ENCODE measurements at regions of chr5 and their contacts with region 1.

Region 1: DNA sequence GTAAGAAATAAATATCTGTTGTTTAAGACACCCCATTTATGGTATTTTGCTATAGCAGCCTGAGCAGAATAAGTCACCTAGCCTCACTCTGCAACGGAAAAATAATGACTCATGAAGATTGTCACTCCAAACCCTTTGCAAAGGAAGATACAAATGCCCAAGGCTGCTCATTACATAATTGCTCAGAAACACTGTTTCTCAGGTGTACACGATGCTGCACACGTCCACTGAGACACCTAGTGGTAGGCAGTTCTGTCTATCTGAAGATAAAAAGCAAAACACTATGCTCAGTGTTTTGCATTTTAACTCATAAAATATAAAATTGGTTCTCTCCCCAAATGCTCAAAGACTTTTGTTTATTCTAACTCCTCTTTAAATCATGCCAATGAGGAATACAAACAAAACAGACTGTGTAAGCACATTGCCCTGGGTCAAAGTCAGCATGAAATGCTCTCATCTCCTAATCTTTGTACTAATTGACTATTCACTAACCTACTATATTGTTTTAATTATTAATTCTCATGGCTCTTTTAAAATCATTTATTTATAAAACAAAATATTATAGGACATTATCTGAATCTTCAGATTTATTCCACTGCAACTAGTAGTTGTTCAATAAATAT is 7.7 kb upstream of the TSLP start:
- DNase-seq: peak; percentile 60
- H3K4me3 ChIP-seq: no peak overlapping the region
- H3K27ac ChIP-seq: no peak overlapping the region
- H3K4me1 ChIP-seq: peaks cover 7% of the 10 kb centered on the region
- H3K27me3 ChIP-seq: no peaks in the 10 kb centered on the region
- CTCF ChIP-seq: peak; percentile 81 to 91

Region 2: GRCh38 chr5:110769000-110769681 is 294.7 kb before region 1 on chr5:
- CTCF ChIA-PET with region 1: no interaction called
- dilution Hi-C with region 1: no loop called
- in situ Hi-C with region 1: loop called in 1 of 2 experiments (anchors 10 kb)
- intact Hi-C with region 1: no loop called
- DNase-seq: peak; percentile 35
- H3K4me3 ChIP-seq: no peak overlapping the region
- H3K27ac ChIP-seq: no peak overlapping the region
- H3K4me1 ChIP-seq: no peaks in the 10 kb centered on the region
- H3K27me3 ChIP-seq: no peaks in the 10 kb centered on the region
- CTCF ChIP-seq: no peak

Region 3: GRCh38 chr5:110790673-110791072 is 273.1 kb before region 1 on chr5:
- CTCF ChIA-PET with region 1: no interaction called
- dilution Hi-C with region 1: no loop called
- in situ Hi-C with region 1: no loop called
- intact Hi-C with region 1: loop called (anchors 1 kb)
- DNase-seq: peak; percentile 20
- H3K4me3 ChIP-seq: no peak overlapping the region
- H3K27ac ChIP-seq: no peak overlapping the region
- H3K4me1 ChIP-seq: peaks cover under 1% of the 10 kb centered on the region
- H3K27me3 ChIP-seq: no peaks in the 10 kb centered on the region
- CTCF ChIP-seq: peak in 1 of 2 donors; percentile 52

Region 4: GRCh38 chr5:110865400-110866094 is 198.3 kb before region 1 on chr5:
- CTCF ChIA-PET with region 1: no interaction called
- dilution Hi-C with region 1: no loop called
- in situ Hi-C with region 1: no loop called
- intact Hi-C with region 1: loop called (anchors 5 kb)
- DNase-seq: peak; percentile 58
- H3K4me3 ChIP-seq: no peak overlapping the region
- H3K27ac ChIP-seq: no peak overlapping the region
- H3K4me1 ChIP-seq: no peaks in the 10 kb centered on the region
- H3K27me3 ChIP-seq: no peaks in the 10 kb centered on the region
- CTCF ChIP-seq: peak; percentile 88 to 89

Region 5: DNA sequence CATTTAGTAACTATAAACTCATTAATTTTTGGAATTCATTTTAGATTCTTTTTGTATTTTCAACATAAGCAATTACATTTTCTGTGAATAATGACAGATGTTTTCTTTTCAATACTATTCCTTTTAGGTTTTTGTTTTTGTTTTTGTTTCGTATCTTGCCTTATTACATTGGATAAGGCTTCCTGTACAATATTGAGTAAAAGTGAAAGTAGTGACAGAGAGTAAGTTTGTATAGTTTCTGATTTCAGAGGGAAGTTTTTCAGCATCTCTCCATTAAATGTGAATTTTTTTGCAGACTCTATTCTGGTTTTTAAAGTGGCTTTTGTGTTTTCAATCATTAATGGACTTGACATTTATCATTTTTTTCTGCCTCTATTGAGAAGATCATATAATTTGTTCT is 147.5 kb after region 1 on chr5:
- CTCF ChIA-PET with region 1: no interaction called
- dilution Hi-C with region 1: no loop called
- in situ Hi-C with region 1: no loop called
- intact Hi-C with region 1: no loop called
- DNase-seq: no peak
- H3K4me3 ChIP-seq: no peak overlapping the region
- H3K27ac ChIP-seq: no peak overlapping the region
- H3K4me1 ChIP-seq: no peaks in the 10 kb centered on the region
- H3K27me3 ChIP-seq: no peaks in the 10 kb centered on the region
- CTCF ChIP-seq: no peak

Region 6: DNA sequence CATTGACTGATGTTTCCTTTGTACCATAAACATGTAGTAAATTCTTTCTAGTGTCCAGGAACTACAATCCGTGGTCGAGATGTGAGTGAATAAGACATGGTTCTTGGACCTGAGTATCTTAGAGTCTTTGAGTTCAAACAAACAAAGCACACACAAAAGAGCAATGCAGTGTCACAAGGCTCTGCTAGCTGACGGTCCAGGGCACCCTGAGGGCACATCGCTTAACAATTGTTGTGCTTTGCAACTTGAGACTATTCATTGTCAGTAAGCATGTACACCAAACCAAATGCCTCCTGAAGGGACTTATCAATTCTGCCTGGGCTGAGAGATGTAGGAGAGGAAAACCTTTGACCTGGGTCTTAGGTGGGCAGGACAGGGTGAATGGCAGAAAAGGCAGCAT is 245.1 kb after region 1 on chr5:
- CTCF ChIA-PET with region 1: no interaction called
- dilution Hi-C with region 1: no loop called
- in situ Hi-C with region 1: no loop called
- intact Hi-C with region 1: no loop called
- DNase-seq: peak; percentile 15
- H3K4me3 ChIP-seq: no peak overlapping the region
- H3K27ac ChIP-seq: no peak overlapping the region
- H3K4me1 ChIP-seq: no peaks in the 10 kb centered on the region
- H3K27me3 ChIP-seq: no peaks in the 10 kb centered on the region
- CTCF ChIP-seq: no peak